ENCODE measurements at regions of chr1 and their contacts with region 1.

Region 1: DNA sequence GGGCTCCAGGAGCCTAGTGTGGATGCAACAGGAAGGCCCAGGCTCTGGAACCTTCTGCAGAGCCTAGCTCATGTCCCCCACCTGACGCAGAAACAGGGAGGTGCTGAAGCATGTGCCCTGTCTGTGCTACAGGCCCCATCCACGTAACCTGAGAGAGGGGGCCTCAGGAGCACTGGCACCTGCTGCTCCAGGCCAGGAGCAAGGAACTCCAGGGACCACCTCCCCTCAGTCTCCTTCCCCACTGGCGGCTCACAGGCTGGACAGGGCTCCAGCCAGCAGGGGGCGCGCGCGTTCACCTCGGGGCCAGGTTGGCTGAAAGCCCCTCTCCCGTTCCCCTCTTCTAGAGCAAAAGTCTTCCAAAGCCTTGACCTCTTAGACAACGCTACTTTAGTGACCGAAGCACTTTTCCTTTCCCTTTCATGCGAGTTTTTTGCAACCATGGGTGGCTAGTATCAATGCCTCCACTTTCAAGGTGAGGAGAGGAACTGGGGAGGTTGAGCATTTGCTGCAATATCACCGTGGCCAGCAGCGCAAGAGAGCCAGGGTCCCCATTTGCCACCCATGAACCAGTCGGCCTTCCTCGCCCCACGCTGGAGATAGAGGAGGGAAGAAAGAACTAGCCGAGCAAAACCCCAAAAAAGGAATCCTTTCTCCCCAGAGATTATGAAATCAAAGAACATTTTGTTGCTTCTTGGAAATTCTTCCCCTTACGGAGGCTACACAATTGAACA is 52.4 kb upstream of the GPR157 start:
- DNase-seq: no peak
- H3K4me3 ChIP-seq: peak overlapping the region; percentile 69 to 87 (median 80)
- H3K27ac ChIP-seq: peak overlapping the region; percentile 31 to 64 (median 56)
- H3K4me1 ChIP-seq: peaks cover 29 to 41% (median 36%) of the 10 kb centered on the region in 4 donors
- H3K27me3 ChIP-seq: peaks cover 0 to 16% (median 3%) of the 10 kb centered on the region in 4 donors
- CTCF ChIP-seq: peak; percentile 78 to 96 (median 90)
- EP300 ChIP-seq: no peak
- POLR2A ChIP-seq: no peak

Region 2: DNA sequence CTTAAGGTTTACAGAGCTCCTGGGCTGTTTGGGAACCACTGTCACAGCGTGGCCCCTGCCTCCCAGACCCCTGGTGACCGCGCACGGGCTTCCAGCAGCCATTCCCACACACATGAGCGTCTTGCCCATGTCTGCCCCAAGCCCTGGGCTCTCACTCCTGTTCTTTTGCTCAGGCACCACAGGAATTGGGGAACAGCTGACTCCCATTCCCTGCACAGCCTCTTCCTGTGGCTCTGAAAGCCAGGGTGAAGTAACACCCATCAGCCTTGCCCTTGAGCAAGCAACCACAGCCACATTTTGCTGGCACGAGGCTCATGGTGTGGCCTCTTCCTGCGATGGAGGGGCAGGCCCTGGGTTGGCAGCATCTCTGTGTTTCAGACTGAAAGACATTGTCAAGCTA is 38.1 kb before region 1 on chr1:
- intact Hi-C with region 1: loop called (anchors 5 kb)
- DNase-seq: no peak
- H3K4me3 ChIP-seq: no peak overlapping the region
- H3K27ac ChIP-seq: no peak overlapping the region
- H3K4me1 ChIP-seq: peaks cover 0 to 5% (median 0%) of the 10 kb centered on the region in 4 donors
- H3K27me3 ChIP-seq: no peaks in the 10 kb centered on the region
- CTCF ChIP-seq: no peak
- EP300 ChIP-seq: no peak
- POLR2A ChIP-seq: no peak

Region 3: GRCh38 chr1:9249534-9250410 is 68.4 kb after region 1 on chr1:
- intact Hi-C with region 1: loop called (anchors 5 kb)
- DNase-seq: no peak
- H3K4me3 ChIP-seq: no peak overlapping the region
- H3K27ac ChIP-seq: peak overlapping the region; percentile 65 to 75 (median 70)
- H3K4me1 ChIP-seq: peaks cover 48 to 89% (median 69%) of the 10 kb centered on the region in 4 donors
- H3K27me3 ChIP-seq: no peaks in the 10 kb centered on the region
- CTCF ChIP-seq: peak; percentile 50 to 70 (median 64)
- EP300 ChIP-seq: no peak
- POLR2A ChIP-seq: no peak

Measured in esophagus muscularis mucosa (tissue), 4 donors.